ENCODE measurements at regions of chr11 and their contacts with region 1.

Region 1: DNA sequence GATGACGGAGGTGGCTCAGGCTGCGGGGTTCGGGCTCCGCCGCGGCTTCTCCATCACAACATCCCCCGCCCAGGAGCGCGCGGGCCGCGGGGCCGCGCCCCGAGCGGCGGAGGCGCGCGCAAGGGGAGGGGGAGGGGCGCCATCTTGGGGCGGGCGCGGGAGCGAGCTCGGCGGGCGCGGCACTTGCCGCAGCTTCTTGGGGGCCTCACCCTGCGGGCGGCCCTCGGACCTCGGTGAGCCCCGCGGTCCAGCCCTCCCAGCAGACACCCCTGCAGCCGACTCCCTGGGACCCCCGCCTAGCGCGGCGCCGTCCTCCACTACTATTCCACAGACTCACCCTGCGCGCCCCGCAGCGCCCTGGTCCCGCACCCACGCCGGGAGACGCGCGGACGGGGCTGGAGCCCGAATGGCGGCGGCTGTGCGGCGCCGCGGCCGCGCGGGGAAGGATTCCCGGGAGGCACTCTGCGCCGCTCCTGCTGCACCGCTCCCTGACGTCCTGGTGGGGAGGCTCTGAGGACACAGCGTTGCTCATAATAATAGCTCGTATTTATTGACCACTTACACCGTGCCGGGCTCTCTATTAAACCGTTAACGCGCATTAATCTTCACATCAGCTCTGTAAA is at the start of gene APBB1:
- DNase-seq: peak; percentile 61 to 83 (median 75)
- H3K4me3 ChIP-seq: peak within 1 kb of the TSS; percentile 77
- H3K4me3 Mint-ChIP-seq: peak within 1 kb of the TSS in 4 of 7 donors; percentile 81 to 93 (median 87)
- H3K27ac ChIP-seq: peak within 1 kb of the TSS; percentile 57
- H3K27ac Mint-ChIP-seq: peak within 1 kb of the TSS; percentile 70 to 96 (median 84)
- H3K4me1 ChIP-seq: peaks cover 49% of the 10 kb centered on the region
- H3K4me1 Mint-ChIP-seq: peaks cover 6 to 10% (median 6%) of the 10 kb centered on the region in 3 donors
- H3K27me3 ChIP-seq: no peaks in the 10 kb centered on the region
- H3K27me3 Mint-ChIP-seq: peaks cover 7 to 15% of the 10 kb centered on the region in 2 donors
- total RNA-seq, gene APBB1: 41.7 to 43.6 TPM

Region 2: GRCh38 chr11:6353367-6353987 is 65.6 kb before region 1 on chr11:
- CTCF ChIA-PET with region 1: no interaction called
- POLR2A ChIA-PET with region 1: no interaction called
- DNase-seq: peak; percentile 23 to 65 (median 35)
- H3K4me3 ChIP-seq: no peak overlapping the region
- H3K4me3 Mint-ChIP-seq: peak overlapping the region in 1 of 7 donors; percentile 28
- H3K27ac ChIP-seq: no peak overlapping the region
- H3K27ac Mint-ChIP-seq: no peak overlapping the region
- H3K4me1 ChIP-seq: no peaks in the 10 kb centered on the region
- H3K4me1 Mint-ChIP-seq: peaks cover 0 to 3% (median 0%) of the 10 kb centered on the region in 3 donors
- H3K27me3 ChIP-seq: no peaks in the 10 kb centered on the region
- H3K27me3 Mint-ChIP-seq: peaks cover 0 to 3% of the 10 kb centered on the region in 2 donors

Region 3: DNA sequence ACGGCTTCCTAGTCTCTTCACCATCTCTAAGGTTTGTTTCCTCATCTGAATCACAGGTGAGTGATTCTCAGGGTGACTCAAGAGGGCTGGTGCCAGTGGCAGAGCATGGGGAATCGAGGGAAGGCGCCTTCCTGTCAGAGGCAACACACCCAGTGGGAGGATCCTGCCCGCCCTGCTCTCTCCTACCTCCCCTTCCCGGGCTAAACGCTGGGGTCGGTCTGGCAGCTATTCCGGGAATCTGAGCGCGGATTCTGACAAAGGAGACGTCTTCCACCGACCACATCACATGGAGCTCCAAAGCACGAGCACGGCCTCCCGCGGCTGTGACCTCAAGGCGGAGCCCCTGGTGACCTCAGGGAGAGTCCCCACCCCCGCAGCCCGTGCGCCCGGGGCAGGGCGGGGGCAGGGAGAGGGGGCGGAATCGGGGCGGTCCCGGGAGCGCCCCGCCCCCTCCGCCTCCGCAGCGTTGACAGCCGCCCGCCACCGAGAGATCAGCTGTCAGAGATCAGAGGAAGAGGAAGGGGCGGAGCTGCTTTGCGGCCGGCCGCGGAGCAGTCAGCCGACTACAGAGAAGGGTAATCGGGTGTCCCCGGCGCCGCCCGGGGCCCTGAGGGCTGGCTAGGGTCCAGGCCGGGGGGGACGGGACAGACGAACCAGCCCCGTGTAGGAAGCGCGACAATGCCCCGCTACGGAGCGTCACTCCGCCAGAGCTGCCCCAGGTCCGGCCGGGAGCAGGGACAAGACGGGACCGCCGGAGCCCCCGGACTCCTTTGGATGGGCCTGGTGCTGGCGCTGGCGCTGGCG is 29.0 kb before region 1 on chr11 and contains the start of gene SMPD1:
- CTCF ChIA-PET with region 1: interaction called, 29 read pairs
- POLR2A ChIA-PET with region 1: interaction called, 31 read pairs
- DNase-seq: peak; percentile 91 to 97 (median 93)
- H3K4me3 ChIP-seq: peak within 1 kb of the TSS; percentile 64
- H3K4me3 Mint-ChIP-seq: peak within 1 kb of the TSS; percentile 85 to 96 (median 93)
- H3K27ac ChIP-seq: peak within 1 kb of the TSS; percentile 71
- H3K27ac Mint-ChIP-seq: peak within 1 kb of the TSS; percentile 89 to 100 (median 98)
- H3K4me1 ChIP-seq: peaks cover 48% of the 10 kb centered on the region
- H3K4me1 Mint-ChIP-seq: peaks cover 43 to 64% (median 47%) of the 10 kb centered on the region in 3 donors
- H3K27me3 ChIP-seq: no peaks in the 10 kb centered on the region
- H3K27me3 Mint-ChIP-seq: no peaks in the 10 kb centered on the region
- total RNA-seq, gene SMPD1: 30.4 to 30.9 TPM

Region 4: GRCh38 chr11:6437993-6438392 is 18.9 kb after region 1 on chr11:
- CTCF ChIA-PET with region 1: interaction called, 15 read pairs
- POLR2A ChIA-PET with region 1: no interaction called
- DNase-seq: no peak
- H3K4me3 ChIP-seq: no peak overlapping the region
- H3K4me3 Mint-ChIP-seq: no peak overlapping the region
- H3K27ac ChIP-seq: no peak overlapping the region
- H3K27ac Mint-ChIP-seq: no peak overlapping the region
- H3K4me1 ChIP-seq: peaks cover 25% of the 10 kb centered on the region
- H3K4me1 Mint-ChIP-seq: no peaks in the 10 kb centered on the region
- H3K27me3 ChIP-seq: no peaks in the 10 kb centered on the region
- H3K27me3 Mint-ChIP-seq: no peaks in the 10 kb centered on the region

Region 5: GRCh38 chr11:6443269-6444003 is 24.3 kb after region 1 on chr11:
- CTCF ChIA-PET with region 1: interaction called, 15 read pairs
- POLR2A ChIA-PET with region 1: no interaction called
- DNase-seq: peak; percentile 33 to 69 (median 44)
- H3K4me3 ChIP-seq: no peak overlapping the region
- H3K4me3 Mint-ChIP-seq: no peak overlapping the region
- H3K27ac ChIP-seq: no peak overlapping the region
- H3K27ac Mint-ChIP-seq: no peak overlapping the region
- H3K4me1 ChIP-seq: peaks cover 21% of the 10 kb centered on the region
- H3K4me1 Mint-ChIP-seq: no peaks in the 10 kb centered on the region
- H3K27me3 ChIP-seq: no peaks in the 10 kb centered on the region
- H3K27me3 Mint-ChIP-seq: no peaks in the 10 kb centered on the region

Measured in CD8-positive, alpha-beta memory T cell (primary cell).